Mucosa of descending colon (tissue), 3 donors: ENCODE measurements at regions of chr15 and their contacts with region 1.

Region 1: DNA sequence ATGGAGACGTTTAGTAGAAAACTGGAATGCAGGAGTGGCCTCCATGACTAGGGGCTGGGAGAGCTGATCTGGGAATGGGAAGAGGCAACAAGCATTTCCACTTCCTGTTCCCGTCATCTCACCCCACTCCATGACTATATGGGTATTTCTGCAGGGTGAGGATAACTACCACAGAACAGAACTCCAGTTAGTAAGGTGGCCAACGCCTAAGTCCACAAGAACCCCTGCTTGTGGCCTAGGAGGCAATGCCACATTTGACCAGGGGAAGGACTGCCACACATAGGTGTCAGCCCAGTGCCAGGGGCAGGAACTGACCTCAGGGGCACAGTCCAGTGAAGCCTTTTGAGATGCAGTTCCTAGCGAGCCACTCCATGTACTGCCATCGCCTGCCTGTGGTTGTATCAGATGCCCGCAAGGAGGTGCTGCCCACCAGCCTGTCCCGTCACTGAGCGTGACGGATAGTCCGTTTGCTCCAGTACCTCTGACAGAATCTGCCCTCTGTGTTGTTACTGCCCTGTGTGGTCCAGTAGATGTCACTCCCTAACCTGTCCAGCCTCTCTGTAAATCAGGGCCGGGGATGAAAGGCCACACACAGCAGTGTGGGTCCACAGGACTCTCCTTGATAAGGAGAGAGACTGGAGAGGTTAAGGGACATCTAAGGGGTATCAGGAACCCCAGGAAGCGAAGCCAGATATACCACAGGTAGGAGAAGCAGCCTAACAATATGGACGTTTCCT is 3.5 kb upstream of the MTFMT start:
- DNase-seq: peak; percentile 72 to 82 (median 81)
- ATAC-seq: peak; percentile 84
- H3K4me3 ChIP-seq: no peak overlapping the region
- H3K4me1 ChIP-seq: peaks cover 14% of the 10 kb centered on the region
- CTCF ChIP-seq: peak; percentile 78

Region 2: GRCh38 chr15:64928626-64929220 is 104.2 kb before region 1 on chr15:
- intact Hi-C with region 1: no loop called
- DNase-seq: no peak
- ATAC-seq: no peak
- H3K4me3 ChIP-seq: no peak overlapping the region
- H3K4me1 ChIP-seq: no peaks in the 10 kb centered on the region
- CTCF ChIP-seq: no peak

Region 3: GRCh38 chr15:65077981-65078352 is 45.0 kb after region 1 on chr15:
- intact Hi-C with region 1: loop called (anchors 2 to 10 kb)
- DNase-seq: peak; percentile 88 to 92 (median 90)
- ATAC-seq: peak; percentile 91
- H3K4me3 ChIP-seq: no peak overlapping the region
- H3K4me1 ChIP-seq: peaks cover 17% of the 10 kb centered on the region
- CTCF ChIP-seq: peak; percentile 65

Region 4: GRCh38 chr15:65086017-65086679 is 53.2 kb after region 1 on chr15:
- intact Hi-C with region 1: loop called in 1 of 2 experiments (anchors 10 kb)
- DNase-seq: peak in 2 of 3 donors; percentile 62 to 71
- ATAC-seq: peak; percentile 21
- H3K4me3 ChIP-seq: no peak overlapping the region
- H3K4me1 ChIP-seq: peaks cover 35% of the 10 kb centered on the region
- CTCF ChIP-seq: peak; percentile 20

Region 5: DNA sequence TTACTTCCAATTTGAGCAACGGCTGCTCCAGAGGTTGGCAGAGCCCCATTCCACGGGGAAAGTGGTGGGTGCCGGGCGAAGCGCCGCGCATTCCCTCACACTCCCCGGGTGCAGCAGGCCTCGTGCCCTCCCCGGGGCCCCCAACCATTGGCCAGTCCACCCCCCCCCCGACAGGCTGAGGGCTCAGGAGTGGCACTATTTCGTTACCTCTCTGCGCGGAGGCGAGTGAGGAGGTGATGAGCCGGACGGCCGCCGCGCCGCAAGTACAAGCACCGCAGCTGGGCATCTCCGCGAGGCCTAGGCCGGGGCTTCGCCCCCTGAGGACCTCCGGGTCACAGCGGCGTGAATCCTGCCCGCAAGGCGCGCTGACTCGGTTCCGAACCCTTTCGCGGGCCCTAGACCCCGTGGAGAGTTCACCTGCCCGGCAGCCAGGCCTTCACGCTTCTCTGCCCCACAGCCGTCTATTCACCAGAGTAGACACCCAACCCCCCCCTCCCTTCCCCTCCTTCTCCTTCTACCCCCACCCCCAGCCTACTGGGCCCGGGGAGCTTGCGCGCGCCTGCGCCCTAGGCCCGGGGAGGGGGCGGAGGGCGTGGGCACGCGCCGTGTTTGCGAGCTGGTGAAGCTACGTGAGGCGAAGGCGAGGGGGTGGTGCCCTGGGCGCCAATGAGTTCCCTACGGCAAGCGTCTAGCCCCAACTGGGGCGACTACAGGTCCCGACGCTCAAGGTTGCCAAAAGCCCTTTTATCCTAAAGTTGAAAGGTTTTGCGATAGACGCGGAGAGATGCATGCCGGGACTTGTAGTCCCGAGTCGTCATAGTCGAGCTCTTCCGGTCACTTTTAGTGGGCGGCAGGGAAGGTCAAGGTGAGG is 152.1 kb after region 1 on chr15 and contains the start of gene CLPX:
- intact Hi-C with region 1: no loop called
- DNase-seq: peak; percentile 92 to 97 (median 94)
- ATAC-seq: peak; percentile 97
- H3K4me3 ChIP-seq: peak within 1 kb of the TSS; percentile 57
- H3K4me1 ChIP-seq: peaks cover 17% of the 10 kb centered on the region
- CTCF ChIP-seq: no peak
- total RNA-seq, gene CLPX: 39.4 to 51.5 (median 50.8) TPM

Region 6: GRCh38 chr15:65217526-65218482 is 184.8 kb after region 1 on chr15:
- intact Hi-C with region 1: no loop called
- DNase-seq: no peak
- ATAC-seq: no peak
- H3K4me3 ChIP-seq: no peak overlapping the region
- H3K4me1 ChIP-seq: no peaks in the 10 kb centered on the region
- CTCF ChIP-seq: no peak